Activated B cell treated with CpG ODN at 0.5 μM for 24 hours (primary cell): ENCODE measurements at regions of chr11 and their contacts with region 1.

Region 1: DNA sequence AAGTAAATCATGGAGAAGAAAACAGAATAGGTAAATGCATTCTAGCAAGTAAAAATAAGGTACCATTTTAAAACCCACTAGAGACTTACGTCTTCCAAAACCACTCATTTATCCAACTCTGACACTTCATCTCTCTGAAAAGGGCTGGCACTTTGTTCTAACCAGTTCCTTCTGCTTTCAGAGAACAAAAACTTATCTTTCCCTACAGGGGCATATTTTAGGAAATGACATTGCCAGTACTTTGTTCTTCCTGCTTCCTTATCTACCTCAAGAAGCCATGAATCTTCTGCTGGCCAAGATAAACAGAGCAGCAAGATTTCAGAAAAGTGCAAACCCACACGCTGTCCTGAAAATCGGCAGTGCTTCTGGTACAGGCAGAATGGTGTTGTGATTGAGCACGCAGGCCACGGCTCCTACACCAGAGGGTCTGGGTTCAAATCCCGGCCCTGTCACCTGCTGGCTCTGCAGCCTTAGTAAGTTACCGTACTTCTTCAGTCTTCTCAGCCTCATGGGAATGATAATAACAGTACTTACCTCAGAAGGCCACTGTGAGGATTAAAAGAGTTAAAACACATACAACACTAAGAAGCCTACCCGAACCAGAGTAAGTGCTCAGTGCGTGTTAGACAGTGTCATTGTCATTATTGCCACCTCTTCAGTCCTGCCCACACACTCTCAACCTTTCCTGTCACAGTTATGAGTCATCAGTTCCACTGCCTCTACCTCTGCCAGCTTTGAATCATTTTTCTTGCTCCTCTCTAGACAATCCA is 11.0 kb downstream of the MPZL3 start:
- DNase-seq: no peak
- ATAC-seq: peak; percentile 93
- H3K4me3 Mint-ChIP-seq: no peak overlapping the region
- H3K27ac Mint-ChIP-seq: peak overlapping the region; percentile 74
- H3K4me1 Mint-ChIP-seq: peaks cover 42% of the 10 kb centered on the region
- H3K27me3 Mint-ChIP-seq: peaks cover 3% of the 10 kb centered on the region
- CTCF ChIP-seq: no peak

Region 2: GRCh38 chr11:118227865-118228785 is 13.1 kb before region 1 on chr11:
- CTCF ChIA-PET with region 1: interaction called, 4 read pairs
- POLR2A ChIA-PET with region 1: interaction called, 7 read pairs
- intact Hi-C with region 1: loop called (anchors 1 kb)
- DNase-seq: no peak
- ATAC-seq: peak; percentile 73
- H3K4me3 Mint-ChIP-seq: peak overlapping the region; percentile 63
- H3K27ac Mint-ChIP-seq: peak overlapping the region; percentile 87
- H3K4me1 Mint-ChIP-seq: peaks cover 59% of the 10 kb centered on the region
- H3K27me3 Mint-ChIP-seq: peaks cover 6% of the 10 kb centered on the region
- CTCF ChIP-seq: no peak

Region 3: DNA sequence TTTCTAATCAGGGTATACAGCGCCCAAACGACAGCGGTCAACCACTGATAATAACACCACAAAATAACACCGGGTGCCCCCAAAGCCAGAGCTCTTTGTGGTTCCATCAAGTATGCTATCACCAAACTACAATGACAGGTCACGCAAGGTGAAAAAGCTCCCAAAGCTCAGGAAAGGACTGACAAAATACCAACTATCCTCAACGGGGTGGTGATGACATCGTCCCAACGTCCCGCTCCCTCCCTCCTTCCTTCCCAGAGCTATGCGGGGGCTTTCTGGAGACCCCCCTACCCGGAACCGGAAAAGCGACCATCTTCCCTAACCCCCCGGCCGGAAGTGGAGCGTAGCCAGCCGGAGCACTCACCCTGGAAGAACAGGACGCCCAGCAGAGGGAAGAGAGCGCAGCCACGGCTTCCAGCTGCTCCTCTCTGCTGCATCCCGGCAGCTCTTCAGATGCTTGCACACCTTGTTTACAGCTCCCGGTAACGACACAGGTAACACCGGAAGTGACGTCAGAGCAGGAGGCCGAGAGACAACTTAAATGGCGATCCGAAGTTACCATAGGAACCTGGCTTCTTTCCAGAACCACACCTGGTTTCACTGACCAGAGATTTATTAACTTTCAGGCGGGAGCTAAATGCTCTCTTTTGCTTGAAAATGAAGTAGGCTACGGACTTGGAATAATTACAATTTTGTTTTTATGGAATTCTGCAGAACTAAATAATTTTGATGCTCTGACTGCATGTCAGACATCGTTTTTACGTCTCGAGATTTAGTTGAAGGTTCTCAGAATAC is 10.9 kb after region 1 on chr11 and contains the start of gene MPZL3:
- CTCF ChIA-PET with region 1: interaction called, 4 read pairs
- POLR2A ChIA-PET with region 1: interaction called, 6 read pairs
- intact Hi-C with region 1: loop called (anchors 1 kb)
- DNase-seq: peak; percentile 72
- ATAC-seq: peak; percentile 76
- H3K4me3 Mint-ChIP-seq: peak within 1 kb of the TSS; percentile 98
- H3K27ac Mint-ChIP-seq: peak within 1 kb of the TSS; percentile 99
- H3K4me1 Mint-ChIP-seq: peaks cover 17% of the 10 kb centered on the region
- H3K27me3 Mint-ChIP-seq: peaks cover 21% of the 10 kb centered on the region
- CTCF ChIP-seq: no peak
- total RNA-seq, gene MPZL3: 2.9 and 3.7 TPM in 2 replicates

Region 4: GRCh38 chr11:118281284-118281683 is 40.1 kb after region 1 on chr11:
- CTCF ChIA-PET with region 1: no interaction called
- POLR2A ChIA-PET with region 1: no interaction called
- intact Hi-C with region 1: loop called (anchors 5 kb)
- DNase-seq: no peak
- ATAC-seq: peak; percentile 74
- H3K4me3 Mint-ChIP-seq: peak overlapping the region; percentile 5
- H3K27ac Mint-ChIP-seq: no peak overlapping the region
- H3K4me1 Mint-ChIP-seq: peaks cover 9% of the 10 kb centered on the region
- H3K27me3 Mint-ChIP-seq: no peaks in the 10 kb centered on the region
- CTCF ChIP-seq: no peak

Region 5: DNA sequence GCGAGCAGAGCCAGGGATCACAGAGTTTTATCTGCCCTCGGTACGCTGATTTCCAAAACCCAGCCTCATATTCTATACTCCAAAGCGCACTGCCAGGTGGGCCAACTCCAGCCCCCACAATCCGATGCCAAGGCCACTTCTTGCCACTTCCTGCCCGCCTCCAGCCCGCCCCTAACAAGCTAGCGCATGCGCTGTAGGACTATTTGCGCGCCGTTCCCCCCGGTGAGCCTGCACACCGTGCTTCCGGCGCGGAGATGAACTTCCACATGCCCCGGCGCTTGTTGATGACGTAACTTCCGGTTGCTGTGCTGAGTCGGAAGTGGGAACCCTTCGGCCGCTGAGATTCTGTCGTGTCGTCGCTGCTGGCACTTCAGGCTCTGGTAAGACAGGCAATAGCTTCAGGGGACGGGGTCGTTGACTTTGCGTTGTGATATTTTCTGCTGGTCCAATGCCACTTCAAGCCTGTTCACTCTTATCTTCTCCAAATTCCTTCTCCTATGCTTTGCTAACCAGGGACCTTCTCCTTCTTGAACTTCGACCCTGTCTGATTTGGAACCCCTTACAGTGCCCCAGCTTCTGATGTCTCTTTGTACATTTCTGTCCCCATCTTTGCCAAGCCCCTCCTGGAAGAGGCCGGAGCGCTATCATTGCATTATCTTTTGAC is 118.2 kb after region 1 on chr11 and contains the start of gene UBE4A:
- CTCF ChIA-PET with region 1: no interaction called
- POLR2A ChIA-PET with region 1: no interaction called
- intact Hi-C with region 1: no loop called
- DNase-seq: peak; percentile 93
- ATAC-seq: peak; percentile 86
- H3K4me3 Mint-ChIP-seq: peak within 1 kb of the TSS; percentile 98
- H3K27ac Mint-ChIP-seq: peak within 1 kb of the TSS; percentile 94
- H3K4me1 Mint-ChIP-seq: peaks cover 39% of the 10 kb centered on the region
- H3K27me3 Mint-ChIP-seq: no peaks in the 10 kb centered on the region
- CTCF ChIP-seq: no peak
- total RNA-seq, gene UBE4A: 28.4 and 34.2 TPM in 2 replicates